Activated CD8-positive, alpha-beta T cell treated with anti-CD3 and anti-CD28 coated beads, Interleukin-2, amount 10 ng/mL, durations not matched to agents 7 days and 5 days (primary cell): ENCODE measurements at regions of chr9 and their contacts with region 1.

Region 1: DNA sequence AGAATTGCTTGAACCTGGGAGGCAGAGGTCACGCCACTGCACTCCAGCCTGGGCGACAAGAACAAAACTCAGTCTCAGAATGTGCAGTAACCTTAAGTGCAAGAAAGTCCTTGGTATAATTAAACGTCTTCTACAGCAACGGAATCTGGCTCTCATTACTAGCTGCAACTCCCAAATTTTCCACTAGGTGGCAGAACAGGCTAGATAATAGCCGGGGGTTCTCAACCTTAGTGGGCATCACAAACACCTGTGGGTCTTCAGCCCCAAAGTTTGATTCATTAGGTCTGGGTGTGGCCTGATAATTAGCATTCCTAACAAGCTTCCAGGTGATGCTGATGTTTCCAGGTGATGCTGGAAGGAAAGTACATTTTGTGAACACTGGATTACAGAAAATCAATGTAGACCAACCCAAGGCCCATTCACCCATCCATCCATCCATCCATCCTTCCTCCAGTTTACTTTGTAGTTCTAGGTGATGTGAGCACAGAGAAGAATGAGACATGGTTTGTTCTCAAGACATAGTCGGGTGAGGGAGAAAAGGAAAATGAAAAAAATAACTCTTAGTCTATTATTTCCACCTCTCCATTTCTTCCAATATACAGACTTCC is 37.3 kb downstream of the FBXW2 start:
- DNase-seq: peak; percentile 77
- ATAC-seq: peak; percentile 76
- H3K4me3 Mint-ChIP-seq: no peak overlapping the region
- H3K27ac Mint-ChIP-seq: no peak overlapping the region
- H3K4me1 Mint-ChIP-seq: peaks cover 15% of the 10 kb centered on the region
- H3K27me3 Mint-ChIP-seq: no peaks in the 10 kb centered on the region

Region 2: GRCh38 chr9:120767456-120768167 is 11.7 kb after region 1 on chr9:
- CTCF ChIA-PET with region 1: interaction called, 45 read pairs
- POLR2A ChIA-PET with region 1: no interaction called
- DNase-seq: no peak
- ATAC-seq: no peak
- H3K4me3 Mint-ChIP-seq: no peak overlapping the region
- H3K27ac Mint-ChIP-seq: peak overlapping the region; percentile 7
- H3K4me1 Mint-ChIP-seq: peaks cover 40% of the 10 kb centered on the region
- H3K27me3 Mint-ChIP-seq: no peaks in the 10 kb centered on the region

Region 3: GRCh38 chr9:120774722-120775121 is 18.8 kb after region 1 on chr9:
- CTCF ChIA-PET with region 1: interaction called, 45 read pairs
- POLR2A ChIA-PET with region 1: no interaction called
- DNase-seq: no peak
- ATAC-seq: no peak
- H3K4me3 Mint-ChIP-seq: no peak overlapping the region
- H3K27ac Mint-ChIP-seq: no peak overlapping the region
- H3K4me1 Mint-ChIP-seq: peaks cover 18% of the 10 kb centered on the region
- H3K27me3 Mint-ChIP-seq: no peaks in the 10 kb centered on the region

Region 4: DNA sequence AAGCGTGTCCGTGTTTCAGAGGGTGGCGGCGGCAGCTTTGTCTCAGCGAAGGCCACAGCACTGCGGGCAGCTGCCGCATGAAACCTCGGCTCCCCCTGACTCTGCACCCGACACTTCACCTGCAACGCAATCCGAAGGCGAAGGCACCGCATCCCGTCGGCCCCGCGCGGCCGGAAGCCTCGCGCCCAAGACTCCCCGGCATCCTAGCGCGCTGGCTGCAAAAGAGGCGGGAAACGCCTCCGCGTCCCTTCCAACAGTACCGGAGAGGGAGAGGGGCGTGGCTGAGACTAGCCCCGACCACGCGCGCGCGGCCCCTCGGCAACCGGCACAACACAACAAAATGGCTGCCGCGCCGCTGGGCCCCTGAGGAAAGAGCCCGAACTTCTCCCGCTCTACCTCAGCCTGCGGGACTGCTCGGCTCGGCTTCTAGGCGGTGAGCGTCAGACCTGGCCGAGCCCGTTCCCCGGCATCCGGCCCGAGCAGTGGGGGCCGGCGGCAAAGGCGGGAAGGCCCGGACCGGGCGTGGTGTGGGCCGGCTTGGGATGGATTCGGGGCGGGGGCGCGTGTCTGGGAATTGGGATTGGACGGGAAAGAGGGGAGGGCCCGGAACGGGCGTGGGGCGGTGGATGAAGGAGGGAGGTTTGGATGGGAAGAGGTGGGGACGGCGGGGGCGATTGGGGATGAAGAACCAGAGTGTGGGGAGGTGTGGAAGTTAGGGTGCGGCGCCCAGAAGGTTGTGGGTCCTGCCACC is 318.9 kb after region 1 on chr9 and contains the start of gene CNTRL:
- CTCF ChIA-PET with region 1: interaction called, 15 read pairs
- POLR2A ChIA-PET with region 1: interaction called, 3 read pairs
- DNase-seq: peak; percentile 96
- ATAC-seq: peak; percentile 87
- H3K4me3 Mint-ChIP-seq: peak within 1 kb of the TSS; percentile 99
- H3K27ac Mint-ChIP-seq: peak within 1 kb of the TSS; percentile 98
- H3K4me1 Mint-ChIP-seq: peaks cover 53% of the 10 kb centered on the region
- H3K27me3 Mint-ChIP-seq: no peaks in the 10 kb centered on the region
- total RNA-seq, gene CNTRL: 80.8 to 84.3 TPM